ENCODE measurements at regions of chr1 and their contacts with region 1.

Region 1: GRCh38 chr1:52404116-52404986 is at the starts of genes ORC1 and PRPF38A:
- DNase-seq: peak; percentile 88
- ATAC-seq: peak; percentile 95
- H3K4me3 Mint-ChIP-seq: peak within 1 kb of the TSS; percentile 99
- H3K27ac Mint-ChIP-seq: peak within 1 kb of the TSS; percentile 95
- H3K4me1 Mint-ChIP-seq: peaks cover 32% of the 10 kb centered on the region
- H3K27me3 Mint-ChIP-seq: no peaks in the 10 kb centered on the region
- CTCF ChIP-seq: no peak
- total RNA-seq, gene ORC1: 3.2 TPM in 2 replicates
- total RNA-seq, gene PRPF38A: 75.6 and 78.4 TPM in 2 replicates

Region 2: DNA sequence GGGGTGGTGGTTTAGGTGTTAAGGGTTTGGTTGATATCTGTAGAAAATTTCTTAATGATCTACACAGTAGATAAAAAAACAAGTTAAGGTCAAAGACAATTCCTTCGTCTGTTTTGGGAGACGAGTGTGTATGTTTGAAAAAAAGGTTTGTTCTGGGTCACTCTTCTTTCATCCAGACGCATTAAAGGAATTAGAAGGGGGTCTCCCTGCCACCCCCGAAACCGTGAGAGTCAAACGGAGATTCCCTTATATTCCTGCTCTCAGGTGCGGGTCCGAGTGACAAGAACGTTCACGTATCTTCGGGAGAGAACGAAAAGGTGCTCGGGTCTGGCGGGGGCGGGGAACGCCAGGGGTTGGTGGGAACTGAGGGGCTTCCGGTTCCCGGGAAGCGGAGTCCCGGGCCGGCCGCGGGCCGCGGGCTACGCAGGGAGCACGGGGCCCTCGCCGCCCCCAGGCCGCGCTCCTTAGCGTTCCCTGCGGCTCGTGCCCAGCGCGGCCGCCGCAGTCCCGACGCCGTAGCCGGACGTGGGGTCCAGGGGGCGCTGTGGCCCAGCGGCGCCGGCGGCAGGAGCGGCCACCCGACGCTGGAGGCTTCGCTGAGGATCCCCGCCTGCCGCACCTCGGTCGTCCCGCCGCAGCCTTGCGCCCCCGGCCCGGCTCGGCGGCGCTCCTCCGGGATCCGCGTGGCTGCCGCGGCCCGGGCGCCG is 262.7 kb before region 1 on chr1 and contains the start of gene ZFYVE9:
- CTCF ChIA-PET with region 1: no interaction called
- POLR2A ChIA-PET with region 1: no interaction called
- intact Hi-C with region 1: loop called (anchors 2 kb)
- DNase-seq: peak; percentile 77
- ATAC-seq: peak; percentile 84
- H3K4me3 Mint-ChIP-seq: peak within 1 kb of the TSS; percentile 81
- H3K27ac Mint-ChIP-seq: peak within 1 kb of the TSS; percentile 9
- H3K4me1 Mint-ChIP-seq: peaks cover 28% of the 10 kb centered on the region
- H3K27me3 Mint-ChIP-seq: peaks cover 18% of the 10 kb centered on the region
- CTCF ChIP-seq: no peak
- total RNA-seq, gene ZFYVE9: 3.2 and 3.3 TPM in 2 replicates

Region 3: GRCh38 chr1:52365746-52366516 is 38.4 kb before region 1 on chr1 and contains the start of gene CC2D1B:
- CTCF ChIA-PET with region 1: no interaction called
- POLR2A ChIA-PET with region 1: interaction called, 34 read pairs
- intact Hi-C with region 1: loop called (anchors 1 kb)
- DNase-seq: peak; percentile 100
- ATAC-seq: peak; percentile 95
- H3K4me3 Mint-ChIP-seq: peak within 1 kb of the TSS; percentile 94
- H3K27ac Mint-ChIP-seq: peak within 1 kb of the TSS; percentile 88
- H3K4me1 Mint-ChIP-seq: peaks cover 30% of the 10 kb centered on the region
- H3K27me3 Mint-ChIP-seq: peaks cover 2% of the 10 kb centered on the region
- CTCF ChIP-seq: no peak
- total RNA-seq, gene CC2D1B: 51.3 and 66.4 TPM in 2 replicates

Region 4: GRCh38 chr1:52386458-52386857 is 17.9 kb before region 1 on chr1:
- CTCF ChIA-PET with region 1: no interaction called
- POLR2A ChIA-PET with region 1: no interaction called
- intact Hi-C with region 1: loop called (anchors 2 kb)
- DNase-seq: no peak
- ATAC-seq: no peak
- H3K4me3 Mint-ChIP-seq: no peak overlapping the region
- H3K27ac Mint-ChIP-seq: no peak overlapping the region
- H3K4me1 Mint-ChIP-seq: no peaks in the 10 kb centered on the region
- H3K27me3 Mint-ChIP-seq: no peaks in the 10 kb centered on the region
- CTCF ChIP-seq: no peak

Region 5: DNA sequence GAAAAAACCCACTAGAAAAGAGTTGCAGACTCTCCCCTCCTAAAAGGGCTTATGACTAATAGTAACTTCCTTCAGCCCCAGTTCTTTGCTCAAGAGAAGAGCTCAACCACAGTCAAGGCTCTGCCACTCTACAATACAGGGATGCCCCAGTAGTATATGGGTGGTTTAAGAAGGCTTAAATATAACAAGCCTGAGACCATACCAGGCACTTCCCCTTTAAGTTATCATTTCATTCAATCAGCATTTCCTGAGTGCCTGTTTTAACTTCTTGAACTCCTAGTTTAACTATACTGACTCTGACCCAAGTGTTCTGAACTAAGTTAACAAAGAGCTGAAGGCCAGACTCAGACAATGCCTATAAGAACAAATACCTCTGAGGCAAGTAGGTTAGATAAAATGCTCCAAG is 19.9 kb after region 1 on chr1:
- CTCF ChIA-PET with region 1: no interaction called
- POLR2A ChIA-PET with region 1: interaction called, 10 read pairs
- intact Hi-C with region 1: no loop called
- DNase-seq: no peak
- ATAC-seq: peak; percentile 73
- H3K4me3 Mint-ChIP-seq: no peak overlapping the region
- H3K27ac Mint-ChIP-seq: peak overlapping the region; percentile 66
- H3K4me1 Mint-ChIP-seq: peaks cover 14% of the 10 kb centered on the region
- H3K27me3 Mint-ChIP-seq: no peaks in the 10 kb centered on the region
- CTCF ChIP-seq: no peak

Region 6: GRCh38 chr1:52726265-52727113 is 322.1 kb after region 1 on chr1 and contains the start of gene ZYG11B:
- CTCF ChIA-PET with region 1: no interaction called
- POLR2A ChIA-PET with region 1: interaction called, 4 read pairs
- intact Hi-C with region 1: loop called (anchors 2 kb)
- DNase-seq: peak; percentile 90
- ATAC-seq: peak; percentile 94
- H3K4me3 Mint-ChIP-seq: peak within 1 kb of the TSS; percentile 91
- H3K27ac Mint-ChIP-seq: peak within 1 kb of the TSS; percentile 85
- H3K4me1 Mint-ChIP-seq: peaks cover 35% of the 10 kb centered on the region
- H3K27me3 Mint-ChIP-seq: no peaks in the 10 kb centered on the region
- CTCF ChIP-seq: no peak
- total RNA-seq, gene ZYG11B: 14.9 and 17.3 TPM in 2 replicates

Region 7: DNA sequence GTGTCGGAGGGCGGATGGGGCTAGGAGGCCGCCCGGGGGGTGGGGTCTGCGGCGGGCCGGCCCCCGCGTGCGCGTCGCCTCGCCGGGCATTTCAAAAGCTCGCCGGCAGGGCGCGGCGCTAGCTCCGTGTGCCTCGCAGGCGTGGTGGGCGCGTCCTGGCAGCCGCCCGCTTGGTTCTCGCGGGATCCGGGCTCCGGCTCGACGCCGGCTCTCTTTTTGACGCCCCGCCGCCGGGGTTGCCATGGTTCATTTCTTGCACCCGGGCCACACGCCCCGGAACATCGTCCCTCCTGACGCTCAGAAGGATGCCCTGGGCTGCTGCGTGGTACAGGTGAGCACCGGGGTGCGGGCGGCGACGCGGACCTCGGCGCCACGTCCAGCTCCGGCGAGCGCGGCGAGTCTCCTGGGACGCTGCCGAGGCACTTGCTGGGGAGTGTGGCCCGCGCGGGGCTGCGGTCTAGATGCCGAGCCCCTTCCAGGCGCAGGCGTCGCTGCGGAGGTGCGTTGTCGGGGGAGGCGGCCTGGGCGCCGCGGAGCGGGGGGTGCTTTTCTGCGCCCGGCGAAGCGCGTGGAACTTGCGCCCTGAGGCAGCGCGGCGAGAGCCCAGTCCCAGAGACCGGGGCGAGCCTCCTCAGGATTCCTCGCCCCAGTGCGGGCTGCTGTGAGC is 438.4 kb after region 1 on chr1 and contains the start of gene ZYG11A:
- CTCF ChIA-PET with region 1: no interaction called
- POLR2A ChIA-PET with region 1: no interaction called
- intact Hi-C with region 1: loop called (anchors 1 kb)
- DNase-seq: peak; percentile 74
- ATAC-seq: peak; percentile 97
- H3K4me3 Mint-ChIP-seq: peak within 1 kb of the TSS; percentile 80
- H3K27ac Mint-ChIP-seq: peak within 1 kb of the TSS; percentile 59
- H3K4me1 Mint-ChIP-seq: peaks cover 6% of the 10 kb centered on the region
- H3K27me3 Mint-ChIP-seq: peaks cover 6% of the 10 kb centered on the region
- CTCF ChIP-seq: no peak
- total RNA-seq, gene ZYG11A: 1.3 and 1.5 TPM in 2 replicates

Measured in activated B cell treated with CpG ODN at 0.5 μM for 24 hours (primary cell).